ENCODE measurements at regions of chr12 and their contacts with region 1.

Region 1: DNA sequence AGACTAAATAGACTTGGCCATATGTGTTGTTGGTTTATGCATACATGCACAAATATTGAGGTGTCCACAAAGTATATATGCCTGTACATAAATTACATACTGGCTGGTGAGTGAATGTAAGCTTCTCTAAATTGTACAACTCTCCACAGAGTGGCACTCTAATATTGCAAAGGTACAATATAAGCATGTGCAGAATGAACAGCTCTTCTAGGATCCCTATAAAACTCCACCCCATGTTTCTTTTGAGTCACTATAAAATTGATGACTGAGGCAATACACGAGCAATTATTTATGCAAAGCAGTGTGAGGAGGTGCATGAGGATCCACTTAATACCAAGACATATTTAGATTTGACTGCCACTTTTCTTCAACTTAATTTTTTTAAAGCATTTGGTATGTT is 172.2 kb downstream of the NAV3 start:
- DNase-seq: no peak
- H3K4me3 ChIP-seq: no peak overlapping the region
- H3K27ac ChIP-seq: no peak overlapping the region
- H3K4me1 ChIP-seq: no peaks in the 10 kb centered on the region
- H3K27me3 ChIP-seq: no peaks in the 10 kb centered on the region
- CTCF ChIP-seq: no peak
- POLR2A ChIP-seq: no peak

Region 2: GRCh38 chr12:78118036-78118435 is 115.2 kb after region 1 on chr12:
- intact Hi-C with region 1: loop called (anchors 10 kb)
- DNase-seq: no peak
- H3K4me3 ChIP-seq: no peak overlapping the region
- H3K27ac ChIP-seq: no peak overlapping the region
- H3K4me1 ChIP-seq: peaks cover 2% of the 10 kb centered on the region
- H3K27me3 ChIP-seq: no peaks in the 10 kb centered on the region
- CTCF ChIP-seq: no peak
- POLR2A ChIP-seq: no peak